ENCODE measurements at regions of chr5 and their contacts with region 1.

Region 1: GRCh38 chr5:124583469-124584350 is 162.7 kb downstream of the ZNF608 start:
- DNase-seq: peak; percentile 68
- H3K4me3 Mint-ChIP-seq: no peak overlapping the region
- H3K27ac Mint-ChIP-seq: no peak overlapping the region
- H3K4me1 Mint-ChIP-seq: peaks cover 11% of the 10 kb centered on the region
- H3K27me3 Mint-ChIP-seq: no peaks in the 10 kb centered on the region

Region 2: GRCh38 chr5:124649491-124650146 is 65.9 kb after region 1 on chr5:
- intact Hi-C with region 1: loop called (anchors 2 kb)
- DNase-seq: peak; percentile 92
- H3K4me3 Mint-ChIP-seq: peak overlapping the region; percentile 48
- H3K27ac Mint-ChIP-seq: peak overlapping the region; percentile 82
- H3K4me1 Mint-ChIP-seq: peaks cover 19% of the 10 kb centered on the region
- H3K27me3 Mint-ChIP-seq: peaks cover 37% of the 10 kb centered on the region